Heart left ventricle (tissue), 16 donors: ENCODE measurements at regions of chr2 and their contacts with region 1.

Region 1: DNA sequence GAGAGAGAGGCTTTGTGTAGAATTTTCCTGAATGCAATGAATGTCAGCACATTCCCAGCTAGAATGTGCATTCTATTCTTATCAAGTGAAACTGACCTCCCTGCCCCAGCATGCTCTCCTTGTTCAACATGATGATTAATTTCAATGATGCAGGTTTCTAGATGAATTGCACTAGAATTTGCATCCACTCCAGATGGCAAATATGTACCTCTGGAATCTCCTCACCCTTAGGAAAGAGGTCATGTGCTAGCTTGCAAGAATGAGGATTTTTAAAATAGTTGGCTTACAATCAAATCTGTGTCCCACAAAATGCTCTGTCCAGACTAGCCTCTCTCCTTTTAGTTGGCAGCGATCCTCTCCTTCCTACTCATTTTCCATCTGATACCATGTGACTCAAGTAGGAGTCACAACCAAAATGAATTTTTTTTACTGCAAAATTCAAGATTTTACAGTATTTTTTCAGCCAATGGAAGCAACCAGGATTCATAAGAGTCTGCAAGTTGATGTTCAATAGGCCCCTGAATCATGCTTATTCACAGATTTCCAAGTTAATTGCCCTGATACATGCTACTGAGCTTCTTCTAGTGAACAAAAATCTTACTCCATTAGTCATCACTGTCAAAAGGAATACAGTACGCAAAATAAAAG is 21.0 kb upstream of the STAT4 start:
- DNase-seq: no peak
- ATAC-seq: peak in 2 of 4 donors; percentile 45 to 72
- H3K4me3 ChIP-seq: no peak overlapping the region
- H3K27ac ChIP-seq: peak overlapping the region in 3 of 12 donors; percentile 9 to 35 (median 24)
- H3K4me1 ChIP-seq: peaks cover 0 to 34% (median 12%) of the 10 kb centered on the region in 12 donors
- H3K27me3 ChIP-seq: no peaks in the 10 kb centered on the region
- CTCF ChIP-seq: no peak
- POLR2A ChIP-seq: no peak

Region 2: GRCh38 chr2:191206613-191207481 is 35.0 kb after region 1 on chr2:
- intact Hi-C with region 1: loop called in 1 of 10 experiments (anchors 5 kb)
- DNase-seq: no peak
- ATAC-seq: peak in 1 of 4 donors; percentile 19
- H3K4me3 ChIP-seq: peak overlapping the region in 1 of 12 donors; percentile 45
- H3K27ac ChIP-seq: peak overlapping the region in 1 of 12 donors; percentile 76
- H3K4me1 ChIP-seq: peaks cover 0 to 29% (median 0%) of the 10 kb centered on the region in 12 donors
- H3K27me3 ChIP-seq: no peaks in the 10 kb centered on the region
- CTCF ChIP-seq: no peak
- POLR2A ChIP-seq: no peak